Activated B cell treated with CpG ODN at 0.5 μM for 24 hours (primary cell): ENCODE measurements at regions of chr7 and their contacts with region 1.

Region 1: DNA sequence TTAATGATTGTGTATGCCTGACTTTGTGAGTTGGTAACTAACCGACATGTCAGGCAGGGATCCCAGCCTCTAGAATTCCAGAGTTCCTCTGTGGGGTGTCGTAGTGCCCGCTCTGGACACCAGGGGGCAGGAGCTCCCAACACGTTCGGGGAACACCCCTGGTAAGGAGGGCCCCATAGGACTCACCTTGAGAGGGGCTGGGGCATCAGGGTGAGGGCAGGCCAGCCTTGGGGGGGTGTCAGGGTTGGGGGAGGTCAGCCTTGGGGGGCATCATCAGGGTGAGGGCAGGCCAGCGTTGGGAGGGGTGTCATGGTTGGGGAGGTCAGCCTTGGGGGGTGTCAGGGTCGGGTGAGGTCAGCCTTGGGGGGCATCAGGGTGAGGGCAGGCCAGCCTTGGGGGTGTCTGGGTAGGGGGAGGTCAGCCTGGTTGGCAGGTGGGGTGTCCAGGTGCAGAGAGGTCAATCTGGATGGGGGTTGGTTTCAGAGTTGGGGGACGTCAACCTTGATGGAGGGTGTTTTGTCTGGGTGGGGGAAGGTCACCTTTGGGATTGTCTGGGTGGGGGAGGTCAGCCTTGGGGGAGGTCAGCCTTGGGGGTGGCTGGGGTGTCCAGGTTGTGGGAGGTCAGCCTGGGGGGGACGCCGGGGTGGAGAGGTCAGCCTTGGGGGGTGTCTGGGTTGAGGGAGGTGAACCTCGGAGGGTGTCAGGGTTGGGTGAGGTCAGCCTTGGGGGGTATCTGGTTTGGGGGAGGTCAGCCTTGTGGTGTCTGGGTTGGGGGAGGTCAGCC is 45.6 kb upstream of the SUN1 start:
- DNase-seq: peak; percentile 63
- ATAC-seq: peak; percentile 98
- H3K4me3 Mint-ChIP-seq: no peak overlapping the region
- H3K27ac Mint-ChIP-seq: no peak overlapping the region
- H3K4me1 Mint-ChIP-seq: no peaks in the 10 kb centered on the region
- H3K27me3 Mint-ChIP-seq: no peaks in the 10 kb centered on the region
- CTCF ChIP-seq: no peak

Region 2: GRCh38 chr7:831596-832166 is 45.0 kb after region 1 on chr7:
- CTCF ChIA-PET with region 1: no interaction called
- POLR2A ChIA-PET with region 1: no interaction called
- intact Hi-C with region 1: loop called (anchors 1 kb)
- DNase-seq: no peak
- ATAC-seq: peak; percentile 67
- H3K4me3 Mint-ChIP-seq: peak overlapping the region; percentile 74
- H3K27ac Mint-ChIP-seq: peak overlapping the region; percentile 94
- H3K4me1 Mint-ChIP-seq: peaks cover 47% of the 10 kb centered on the region
- H3K27me3 Mint-ChIP-seq: no peaks in the 10 kb centered on the region
- CTCF ChIP-seq: no peak

Region 3: GRCh38 chr7:836411-837400 is 50.0 kb after region 1 on chr7:
- CTCF ChIA-PET with region 1: no interaction called
- POLR2A ChIA-PET with region 1: no interaction called
- intact Hi-C with region 1: loop called (anchors 1 kb)
- DNase-seq: no peak
- ATAC-seq: no peak
- H3K4me3 Mint-ChIP-seq: no peak overlapping the region
- H3K27ac Mint-ChIP-seq: no peak overlapping the region
- H3K4me1 Mint-ChIP-seq: peaks cover 26% of the 10 kb centered on the region
- H3K27me3 Mint-ChIP-seq: no peaks in the 10 kb centered on the region
- CTCF ChIP-seq: no peak

Region 4: GRCh38 chr7:842431-843031 is 55.9 kb after region 1 on chr7:
- CTCF ChIA-PET with region 1: no interaction called
- POLR2A ChIA-PET with region 1: no interaction called
- intact Hi-C with region 1: loop called (anchors 2 kb)
- DNase-seq: no peak
- ATAC-seq: no peak
- H3K4me3 Mint-ChIP-seq: no peak overlapping the region
- H3K27ac Mint-ChIP-seq: no peak overlapping the region
- H3K4me1 Mint-ChIP-seq: no peaks in the 10 kb centered on the region
- H3K27me3 Mint-ChIP-seq: no peaks in the 10 kb centered on the region
- CTCF ChIP-seq: no peak

Region 5: GRCh38 chr7:924541-925261 is 138.0 kb after region 1 on chr7:
- CTCF ChIA-PET with region 1: no interaction called
- POLR2A ChIA-PET with region 1: no interaction called
- intact Hi-C with region 1: no loop called
- DNase-seq: peak; percentile 56
- ATAC-seq: peak; percentile 49
- H3K4me3 Mint-ChIP-seq: peak overlapping the region; percentile 64
- H3K27ac Mint-ChIP-seq: no peak overlapping the region
- H3K4me1 Mint-ChIP-seq: peaks cover 55% of the 10 kb centered on the region
- H3K27me3 Mint-ChIP-seq: no peaks in the 10 kb centered on the region
- CTCF ChIP-seq: no peak

Region 6: DNA sequence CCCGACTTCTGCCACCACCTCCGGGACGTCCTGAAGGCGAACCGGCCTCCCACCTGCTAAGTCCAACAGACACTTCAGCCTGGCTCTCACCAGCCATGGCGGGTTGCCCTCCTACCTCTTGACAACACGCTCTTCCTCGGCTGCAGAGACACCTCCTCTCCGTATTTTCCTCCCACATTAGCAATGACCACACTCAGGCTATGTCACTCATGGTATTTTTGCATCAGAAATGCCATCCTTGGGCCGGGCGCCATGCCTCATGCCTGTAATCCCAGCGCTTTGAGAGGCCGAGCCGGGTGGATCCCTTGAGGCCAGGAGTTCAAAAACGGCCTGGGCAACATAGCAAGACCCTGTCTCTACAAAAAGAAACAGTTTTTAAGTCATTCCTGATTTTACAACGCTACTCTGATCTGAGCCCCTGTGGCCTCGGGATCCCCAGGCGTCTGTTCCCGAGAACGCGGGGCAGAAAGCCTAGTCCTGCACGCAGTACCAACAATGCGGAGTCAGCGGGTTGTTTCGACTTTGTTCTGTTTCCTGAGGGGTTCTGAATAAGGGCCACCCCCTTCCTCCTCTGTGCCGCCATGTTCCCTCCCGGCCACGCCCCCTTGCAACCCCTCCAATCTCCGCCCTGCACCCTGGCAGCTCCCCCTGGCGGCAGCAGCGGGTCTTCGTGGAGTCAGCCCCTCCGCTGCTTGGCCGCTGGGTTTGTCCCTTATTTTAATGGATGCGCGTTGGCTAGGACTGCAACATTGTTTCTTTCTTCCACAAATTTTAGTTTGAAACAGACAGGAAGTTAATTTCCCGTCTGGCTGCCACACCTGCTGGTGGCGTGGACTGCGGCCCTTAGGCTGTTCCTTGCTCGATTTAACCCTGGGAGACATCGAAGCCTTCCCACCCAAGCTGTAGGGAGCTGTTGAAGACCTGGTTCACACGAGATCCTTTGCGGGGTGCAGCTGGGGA is 383.0 kb after region 1 on chr7:
- CTCF ChIA-PET with region 1: no interaction called
- POLR2A ChIA-PET with region 1: no interaction called
- intact Hi-C with region 1: loop called (anchors 2 kb)
- DNase-seq: peak; percentile 74
- ATAC-seq: peak; percentile 97
- H3K4me3 Mint-ChIP-seq: peak overlapping the region; percentile 76
- H3K27ac Mint-ChIP-seq: no peak overlapping the region
- H3K4me1 Mint-ChIP-seq: peaks cover 14% of the 10 kb centered on the region
- H3K27me3 Mint-ChIP-seq: no peaks in the 10 kb centered on the region
- CTCF ChIP-seq: no peak

Region 7: GRCh38 chr7:1512781-1513656 is 726.4 kb after region 1 on chr7:
- CTCF ChIA-PET with region 1: no interaction called
- POLR2A ChIA-PET with region 1: no interaction called
- intact Hi-C with region 1: no loop called
- DNase-seq: peak; percentile 42
- ATAC-seq: peak; percentile 76
- H3K4me3 Mint-ChIP-seq: peak overlapping the region; percentile 60
- H3K27ac Mint-ChIP-seq: peak overlapping the region; percentile 61
- H3K4me1 Mint-ChIP-seq: peaks cover 45% of the 10 kb centered on the region
- H3K27me3 Mint-ChIP-seq: no peaks in the 10 kb centered on the region
- CTCF ChIP-seq: no peak

Region 8: GRCh38 chr7:1693991-1694524 is 907.4 kb after region 1 on chr7:
- CTCF ChIA-PET with region 1: no interaction called
- POLR2A ChIA-PET with region 1: no interaction called
- intact Hi-C with region 1: no loop called
- DNase-seq: no peak
- ATAC-seq: no peak
- H3K4me3 Mint-ChIP-seq: no peak overlapping the region
- H3K27ac Mint-ChIP-seq: no peak overlapping the region
- H3K4me1 Mint-ChIP-seq: no peaks in the 10 kb centered on the region
- H3K27me3 Mint-ChIP-seq: peaks cover 26% of the 10 kb centered on the region
- CTCF ChIP-seq: no peak